Pancreas (tissue), 10 donors: ENCODE measurements at regions of chr17 and their contacts with region 1.

Region 1: DNA sequence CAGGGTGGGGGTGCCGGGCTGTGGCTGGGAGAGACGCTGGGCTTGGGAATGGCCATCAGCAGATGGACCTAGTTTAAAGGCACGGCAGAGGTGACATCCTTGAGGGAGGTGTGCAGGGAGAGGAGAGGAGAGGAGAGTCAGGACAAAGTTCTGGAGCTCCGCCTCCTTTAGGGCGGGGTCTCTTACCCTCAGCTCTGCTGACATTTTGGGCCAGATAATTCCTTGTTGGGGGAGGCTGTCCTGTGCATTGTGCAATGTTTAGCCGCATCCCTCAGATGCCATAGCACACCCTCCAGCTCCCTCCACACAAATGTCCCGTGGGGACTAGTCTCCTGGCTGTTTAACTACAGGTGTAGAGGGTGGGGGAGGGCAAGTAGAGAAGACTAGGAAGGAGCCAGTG is 48.3 kb downstream of the ARHGAP23 start:
- DNase-seq: no peak
- ATAC-seq: no peak
- H3K4me3 ChIP-seq: no peak overlapping the region
- H3K27ac ChIP-seq: no peak overlapping the region
- H3K4me1 ChIP-seq: no peaks in the 10 kb centered on the region
- H3K27me3 ChIP-seq: no peaks in the 10 kb centered on the region
- CTCF ChIP-seq: no peak

Region 2: DNA sequence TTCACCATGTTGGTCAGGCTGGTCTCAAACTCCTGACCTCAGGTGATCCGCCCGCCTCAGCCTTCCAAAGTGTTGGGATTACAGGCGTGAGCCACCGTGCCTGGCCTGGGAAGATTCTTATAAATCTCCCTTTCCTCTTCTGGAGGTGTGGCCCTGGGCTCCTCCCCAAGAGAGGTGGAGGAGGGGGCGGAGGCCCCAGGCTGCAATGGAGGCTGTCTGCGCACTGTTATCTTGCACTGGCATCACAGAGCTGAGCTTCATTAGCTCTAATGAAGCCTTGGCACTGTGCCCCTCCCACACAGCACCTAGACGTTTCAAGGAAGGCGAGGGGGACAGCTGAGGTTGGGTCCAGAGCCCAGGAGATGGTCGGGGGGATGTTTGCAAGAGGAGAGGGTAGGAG is 40.7 kb before region 1 on chr17:
- intact Hi-C with region 1: loop called in 1 of 3 experiments (anchors 5 kb)
- DNase-seq: no peak
- ATAC-seq: no peak
- H3K4me3 ChIP-seq: no peak overlapping the region
- H3K27ac ChIP-seq: no peak overlapping the region
- H3K4me1 ChIP-seq: no peaks in the 10 kb centered on the region
- H3K27me3 ChIP-seq: no peaks in the 10 kb centered on the region
- CTCF ChIP-seq: no peak